GM12878 (cell line): ENCODE measurements at regions of chr7 and their contacts with region 1.

Region 1: DNA sequence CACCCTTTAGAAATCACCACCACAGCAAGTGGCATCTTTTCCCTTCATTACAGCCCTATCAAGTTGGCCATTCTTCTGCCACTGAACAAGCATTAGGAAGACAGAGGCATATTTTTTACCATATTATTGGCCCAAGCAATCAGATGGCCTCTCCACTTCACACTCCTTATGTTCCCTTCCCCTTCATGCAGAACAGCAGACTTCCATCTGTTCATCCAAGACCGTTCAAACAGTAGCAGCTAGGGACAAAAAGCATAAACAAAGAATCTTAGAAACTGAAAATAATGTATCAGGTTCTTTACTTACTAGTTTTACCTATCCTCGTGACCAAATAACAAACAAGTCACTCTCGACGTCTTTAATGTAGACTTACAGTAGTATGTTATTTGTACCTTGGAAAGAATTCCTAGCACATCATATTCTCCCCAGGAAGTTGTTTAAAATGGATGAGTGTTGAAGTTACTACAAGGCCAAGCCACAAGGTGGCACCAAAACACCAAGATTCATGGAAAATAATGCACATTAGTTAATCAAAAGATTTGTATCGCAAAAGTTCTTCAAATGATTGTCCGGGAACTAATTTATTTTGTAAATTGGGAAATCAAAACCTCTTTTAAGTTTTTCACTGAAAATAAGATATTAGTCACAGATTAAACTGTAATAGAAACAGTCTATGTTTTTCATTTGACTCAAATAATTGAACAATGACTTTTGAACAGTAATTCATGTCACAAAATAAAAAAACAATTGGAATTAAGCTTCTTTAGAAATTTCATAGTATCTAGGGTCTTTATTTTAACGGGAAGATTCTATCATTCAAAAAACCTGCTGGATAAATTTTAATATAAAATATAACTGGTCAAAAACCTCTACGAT is 112.1 kb downstream of the VPS41 start:
- DNase-seq: peak; percentile 15
- ATAC-seq: 0 out of 3 replicates have a peak, but pooled peaks have one; percentile 39
- H3K4me3 ChIP-seq: no peak overlapping the region
- H3K27ac ChIP-seq: no peak overlapping the region
- H3K4me1 ChIP-seq: no peaks in the 10 kb centered on the region
- H3K27me3 ChIP-seq: no peaks in the 10 kb centered on the region
- CTCF ChIP-seq: peak; percentile 53 to 76 (median 61); a peak in 5 of 6 replicates
- EP300 ChIP-seq: no peak
- POLR2A ChIP-seq: no peak
- RAD21 ChIP-seq: peak; percentile 91

Region 2: DNA sequence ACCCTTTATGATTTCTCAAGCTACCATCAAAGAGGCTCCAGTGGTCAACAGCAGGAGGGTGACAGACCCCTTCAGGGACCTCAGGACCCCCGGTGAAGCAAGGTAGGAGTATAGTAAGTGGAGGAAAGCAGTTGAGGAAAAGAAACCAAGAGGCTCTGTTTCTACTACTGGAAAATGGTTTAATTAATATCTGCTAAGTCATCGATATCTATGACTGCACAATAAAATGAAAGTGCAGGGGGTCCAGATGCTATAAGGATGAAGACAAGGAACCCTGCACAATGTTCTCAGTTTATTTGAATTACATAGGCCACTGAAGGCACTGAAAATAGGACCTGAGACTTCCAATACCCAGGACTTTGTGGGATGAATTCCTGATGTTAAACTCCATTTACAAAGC is 189.4 kb before region 1 on chr7:
- CTCF ChIA-PET with region 1: no interaction called
- POLR2A ChIA-PET with region 1: no interaction called
- RAD21 ChIA-PET with region 1: no interaction called
- SMC1A ChIA-PET with region 1: no interaction called
- in situ Hi-C with region 1: no loop called
- intact Hi-C with region 1: no loop called
- DNase-seq: no peak
- ATAC-seq: no peak
- H3K4me3 ChIP-seq: no peak overlapping the region
- H3K27ac ChIP-seq: no peak overlapping the region
- H3K4me1 ChIP-seq: no peaks in the 10 kb centered on the region
- H3K27me3 ChIP-seq: peaks cover 2 to 5% of the 10 kb centered on the region in 2 experiments; a peak in 3 of 4 replicates
- CTCF ChIP-seq: no peak
- EP300 ChIP-seq: no peak
- POLR2A ChIP-seq: no peak
- RAD21 ChIP-seq: no peak

Region 3: DNA sequence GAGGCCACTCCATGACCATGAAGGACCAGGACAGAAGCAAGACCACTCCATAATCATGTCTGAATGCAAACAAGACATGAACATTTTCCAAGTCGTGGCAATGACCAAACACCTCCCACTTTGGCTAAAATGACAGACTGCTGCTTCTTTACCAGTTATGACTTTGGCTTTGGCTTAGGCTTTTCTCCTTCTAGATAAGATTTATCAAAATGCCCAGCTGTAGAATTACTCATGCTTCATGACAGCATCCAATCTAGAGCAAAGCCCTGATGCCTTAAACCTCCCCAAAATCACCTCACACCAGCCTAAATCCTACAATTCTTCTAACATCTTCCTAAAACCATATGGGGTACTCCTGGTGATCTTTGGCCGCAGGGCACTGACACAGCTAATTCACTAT is 10.0 kb after region 1 on chr7:
- CTCF ChIA-PET with region 1: interaction called, 23 read pairs
- POLR2A ChIA-PET with region 1: no interaction called
- RAD21 ChIA-PET with region 1: no interaction called
- SMC1A ChIA-PET with region 1: interaction called, 3 read pairs
- in situ Hi-C with region 1: no loop called
- intact Hi-C with region 1: no loop called
- DNase-seq: no peak
- ATAC-seq: no peak
- H3K4me3 ChIP-seq: no peak overlapping the region
- H3K27ac ChIP-seq: no peak overlapping the region
- H3K4me1 ChIP-seq: no peaks in the 10 kb centered on the region
- H3K27me3 ChIP-seq: no peaks in the 10 kb centered on the region
- CTCF ChIP-seq: no peak
- EP300 ChIP-seq: no peak
- POLR2A ChIP-seq: no peak
- RAD21 ChIP-seq: no peak

Region 4: DNA sequence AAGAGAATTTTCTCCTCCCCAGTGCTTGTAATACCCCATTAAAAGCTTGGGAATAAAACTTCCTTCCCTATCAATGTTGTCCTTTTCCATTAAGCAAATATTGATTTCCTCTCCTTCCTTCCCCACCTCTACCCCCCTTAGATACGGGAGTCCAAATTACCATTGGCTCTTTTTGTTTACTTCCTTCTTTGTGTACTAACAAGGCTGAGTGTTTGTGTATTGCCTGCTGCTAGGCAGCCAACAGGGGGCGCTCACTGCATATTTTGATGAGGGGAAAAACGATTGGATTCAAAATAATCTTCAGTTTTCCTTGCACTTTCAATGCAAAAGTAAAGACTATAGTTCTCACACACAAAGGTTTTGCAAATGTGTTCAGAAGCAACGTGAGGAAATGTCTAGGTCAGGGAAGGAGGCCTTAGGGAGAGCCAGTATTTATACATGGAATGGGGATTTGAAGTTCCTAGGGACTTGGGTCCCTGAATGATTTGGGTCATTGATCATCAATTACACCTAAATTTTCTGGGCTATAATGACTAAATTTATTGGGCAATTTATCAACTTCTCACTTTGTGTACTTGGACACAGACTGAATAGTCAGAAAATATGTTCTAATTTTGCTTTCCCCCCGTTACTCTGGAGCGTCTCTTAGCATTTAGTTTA is 135.8 kb after region 1 on chr7:
- CTCF ChIA-PET with region 1: interaction called, 7 read pairs
- POLR2A ChIA-PET with region 1: no interaction called
- RAD21 ChIA-PET with region 1: interaction called, 3 read pairs
- SMC1A ChIA-PET with region 1: interaction called, 3 read pairs
- in situ Hi-C with region 1: no loop called
- intact Hi-C with region 1: loop called (anchors 1 kb)
- DNase-seq: peak; percentile 16
- ATAC-seq: peak; percentile 92
- H3K4me3 ChIP-seq: no peak overlapping the region
- H3K27ac ChIP-seq: no peak overlapping the region
- H3K4me1 ChIP-seq: no peaks in the 10 kb centered on the region
- H3K27me3 ChIP-seq: no peaks in the 10 kb centered on the region
- CTCF ChIP-seq: peak; percentile 81 to 96 (median 90)
- EP300 ChIP-seq: no peak
- POLR2A ChIP-seq: no peak
- RAD21 ChIP-seq: peak; percentile 80

Region 5: DNA sequence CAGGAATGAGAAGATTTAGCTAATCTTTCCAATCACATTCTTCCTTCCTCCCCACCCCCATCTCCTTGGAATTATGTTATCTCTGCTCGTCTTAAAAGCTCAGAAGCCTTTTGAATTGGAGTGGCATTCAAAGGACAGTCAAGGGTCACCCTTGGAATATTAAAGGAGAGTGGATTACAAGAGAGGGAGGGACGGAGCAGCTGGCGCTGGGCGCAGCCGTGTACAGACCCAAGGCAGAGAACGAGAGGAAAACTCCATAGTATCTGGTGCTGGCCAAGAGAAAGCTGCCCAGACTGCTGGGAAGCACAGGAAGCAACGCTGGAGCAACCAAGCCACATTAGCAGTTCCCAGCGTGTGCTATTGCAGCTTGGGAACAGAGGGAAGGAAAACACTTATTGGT is 276.6 kb after region 1 on chr7:
- CTCF ChIA-PET with region 1: interaction called, 3 read pairs
- POLR2A ChIA-PET with region 1: no interaction called
- RAD21 ChIA-PET with region 1: no interaction called
- SMC1A ChIA-PET with region 1: no interaction called
- in situ Hi-C with region 1: no loop called
- intact Hi-C with region 1: loop called (anchors 10 kb)
- DNase-seq: no peak
- ATAC-seq: no peak
- H3K4me3 ChIP-seq: no peak overlapping the region
- H3K27ac ChIP-seq: no peak overlapping the region
- H3K4me1 ChIP-seq: no peaks in the 10 kb centered on the region
- H3K27me3 ChIP-seq: no peaks in the 10 kb centered on the region
- CTCF ChIP-seq: no peak
- EP300 ChIP-seq: no peak
- POLR2A ChIP-seq: no peak
- RAD21 ChIP-seq: no peak

Region 6: GRCh38 chr7:39517240-39517639 is 720.4 kb after region 1 on chr7:
- CTCF ChIA-PET with region 1: interaction called, 3 read pairs
- POLR2A ChIA-PET with region 1: no interaction called
- RAD21 ChIA-PET with region 1: no interaction called
- SMC1A ChIA-PET with region 1: no interaction called
- in situ Hi-C with region 1: loop called (anchors 5 kb)
- intact Hi-C with region 1: loop called (anchors 2 kb)
- DNase-seq: no peak
- ATAC-seq: no peak
- H3K4me3 ChIP-seq: no peak overlapping the region
- H3K27ac ChIP-seq: no peak overlapping the region
- H3K4me1 ChIP-seq: no peaks in the 10 kb centered on the region
- H3K27me3 ChIP-seq: no peaks in the 10 kb centered on the region; a peak in 1 of 4 replicates
- CTCF ChIP-seq: no peak
- EP300 ChIP-seq: no peak
- POLR2A ChIP-seq: no peak
- RAD21 ChIP-seq: no peak

Region 7: GRCh38 chr7:39525926-39526325 is 729.1 kb after region 1 on chr7:
- CTCF ChIA-PET with region 1: interaction called, 3 read pairs
- POLR2A ChIA-PET with region 1: no interaction called
- RAD21 ChIA-PET with region 1: no interaction called
- SMC1A ChIA-PET with region 1: interaction called, 3 read pairs
- in situ Hi-C with region 1: no loop called
- intact Hi-C with region 1: loop called (anchors 2 kb)
- DNase-seq: no peak
- ATAC-seq: no peak
- H3K4me3 ChIP-seq: no peak overlapping the region
- H3K27ac ChIP-seq: no peak overlapping the region
- H3K4me1 ChIP-seq: no peaks in the 10 kb centered on the region
- H3K27me3 ChIP-seq: no peaks in the 10 kb centered on the region; a peak in 2 of 4 replicates
- CTCF ChIP-seq: no peak
- EP300 ChIP-seq: no peak
- POLR2A ChIP-seq: no peak
- RAD21 ChIP-seq: no peak